ENCODE measurements at regions of chr15 and their contacts with region 1.

Region 1: GRCh38 chr15:62711691-62712454 is 330.7 kb upstream of the TPM1 start:
- DNase-seq: no peak
- H3K4me3 Mint-ChIP-seq: no peak overlapping the region
- H3K27ac Mint-ChIP-seq: peak overlapping the region; percentile 63
- H3K4me1 Mint-ChIP-seq: peaks cover 12% of the 10 kb centered on the region
- H3K27me3 Mint-ChIP-seq: no peaks in the 10 kb centered on the region

Region 2: DNA sequence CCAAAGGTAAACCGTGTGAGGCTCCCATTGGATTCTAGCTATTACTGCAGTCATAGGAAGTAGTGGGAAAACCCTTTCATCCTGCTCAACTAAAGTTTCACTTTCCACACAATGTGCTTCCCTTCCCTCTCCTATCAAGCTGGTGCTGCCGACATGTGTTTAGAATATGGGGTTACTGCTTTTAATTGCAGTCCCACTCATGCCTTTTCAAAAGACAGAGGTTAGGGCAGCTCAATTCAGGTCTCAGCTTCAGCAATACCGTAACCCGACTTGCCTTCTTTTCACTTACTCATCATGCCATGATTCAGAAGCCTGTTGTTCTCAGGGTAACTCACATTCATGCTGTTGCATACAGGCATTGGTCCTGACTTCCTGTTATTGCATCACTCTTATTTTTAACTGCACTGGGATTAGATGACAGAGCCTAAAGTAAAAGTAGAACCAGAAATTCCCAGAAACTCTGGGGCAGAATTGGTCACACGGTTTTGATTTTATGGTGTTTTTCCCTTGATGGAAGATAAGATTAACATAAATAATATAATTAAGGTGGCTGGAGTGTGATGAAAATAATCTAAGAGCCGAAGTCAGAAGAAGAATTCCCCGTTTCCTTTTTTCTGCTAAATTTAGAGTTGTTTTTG is 592.5 kb before region 1 on chr15:
- intact Hi-C with region 1: loop called (anchors 5 kb)
- DNase-seq: no peak
- H3K4me3 Mint-ChIP-seq: no peak overlapping the region
- H3K27ac Mint-ChIP-seq: no peak overlapping the region
- H3K4me1 Mint-ChIP-seq: peaks cover 27% of the 10 kb centered on the region
- H3K27me3 Mint-ChIP-seq: no peaks in the 10 kb centered on the region

Region 3: GRCh38 chr15:62649793-62650420 is 62.0 kb before region 1 on chr15:
- intact Hi-C with region 1: loop called (anchors 10 kb)
- DNase-seq: no peak
- H3K4me3 Mint-ChIP-seq: no peak overlapping the region
- H3K27ac Mint-ChIP-seq: no peak overlapping the region
- H3K4me1 Mint-ChIP-seq: peaks cover 10% of the 10 kb centered on the region
- H3K27me3 Mint-ChIP-seq: no peaks in the 10 kb centered on the region